Spleen (tissue), 13 donors: ENCODE measurements at regions of chrX and their contacts with region 1.

Region 1: GRCh38 chrX:100768679-100769338 is 36.9 kb upstream of the SYTL4 start:
- DNase-seq: peak; percentile 91
- H3K4me3 ChIP-seq: no peak overlapping the region
- H3K27ac ChIP-seq: no peak overlapping the region
- H3K4me1 ChIP-seq: no peaks in the 10 kb centered on the region
- H3K27me3 ChIP-seq: peaks cover 0 to 2% (median 0%) of the 10 kb centered on the region in 7 donors
- CTCF ChIP-seq: peak; percentile 83 to 99 (median 95)
- POLR2A ChIP-seq: no peak

Region 2: DNA sequence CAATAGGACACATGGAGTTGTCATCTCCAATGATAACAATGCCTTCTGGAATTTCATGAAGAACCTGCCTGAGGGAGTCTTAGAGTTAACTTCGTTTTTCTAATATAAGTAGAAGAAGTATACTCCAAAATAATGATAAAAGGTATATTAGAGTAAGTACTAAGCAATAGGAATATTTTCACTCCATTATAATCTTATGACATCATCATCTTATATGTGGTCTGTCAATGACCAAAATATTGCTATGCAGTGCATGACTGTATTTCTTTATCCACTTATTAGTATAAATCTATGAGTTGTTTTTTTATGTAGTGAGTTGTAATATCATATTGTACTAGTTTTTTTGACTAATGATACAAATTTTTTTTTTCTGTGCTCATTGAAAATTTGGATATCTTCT is 1204.6 kb before region 1 on chrX:
- intact Hi-C with region 1: no loop called
- DNase-seq: no peak
- H3K4me3 ChIP-seq: no peak overlapping the region
- H3K27ac ChIP-seq: no peak overlapping the region
- H3K4me1 ChIP-seq: no peaks in the 10 kb centered on the region
- H3K27me3 ChIP-seq: no peaks in the 10 kb centered on the region
- CTCF ChIP-seq: no peak
- POLR2A ChIP-seq: no peak

Region 3: DNA sequence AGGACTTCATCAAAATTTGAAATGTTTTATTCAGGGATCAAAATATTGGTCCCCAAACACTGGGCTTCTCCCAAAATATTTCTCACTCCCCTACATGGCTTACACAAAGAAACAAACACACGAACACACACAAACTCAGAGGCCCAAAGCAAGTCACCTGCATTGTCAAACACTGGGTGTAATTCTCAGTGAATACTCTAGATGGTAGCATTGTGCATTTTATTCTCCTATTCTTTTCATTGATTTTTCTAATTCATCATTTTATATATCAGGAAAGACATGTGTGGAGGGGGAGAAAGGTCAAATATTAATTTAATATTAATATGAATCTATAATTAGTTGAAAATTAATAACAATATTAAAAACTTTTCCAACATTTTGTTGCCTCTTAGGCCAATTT is 256.3 kb before region 1 on chrX:
- intact Hi-C with region 1: loop called (anchors 10 kb)
- DNase-seq: no peak
- H3K4me3 ChIP-seq: no peak overlapping the region
- H3K27ac ChIP-seq: no peak overlapping the region
- H3K4me1 ChIP-seq: no peaks in the 10 kb centered on the region
- H3K27me3 ChIP-seq: no peaks in the 10 kb centered on the region
- CTCF ChIP-seq: peak; percentile 25 to 71 (median 58)
- POLR2A ChIP-seq: no peak

Region 4: DNA sequence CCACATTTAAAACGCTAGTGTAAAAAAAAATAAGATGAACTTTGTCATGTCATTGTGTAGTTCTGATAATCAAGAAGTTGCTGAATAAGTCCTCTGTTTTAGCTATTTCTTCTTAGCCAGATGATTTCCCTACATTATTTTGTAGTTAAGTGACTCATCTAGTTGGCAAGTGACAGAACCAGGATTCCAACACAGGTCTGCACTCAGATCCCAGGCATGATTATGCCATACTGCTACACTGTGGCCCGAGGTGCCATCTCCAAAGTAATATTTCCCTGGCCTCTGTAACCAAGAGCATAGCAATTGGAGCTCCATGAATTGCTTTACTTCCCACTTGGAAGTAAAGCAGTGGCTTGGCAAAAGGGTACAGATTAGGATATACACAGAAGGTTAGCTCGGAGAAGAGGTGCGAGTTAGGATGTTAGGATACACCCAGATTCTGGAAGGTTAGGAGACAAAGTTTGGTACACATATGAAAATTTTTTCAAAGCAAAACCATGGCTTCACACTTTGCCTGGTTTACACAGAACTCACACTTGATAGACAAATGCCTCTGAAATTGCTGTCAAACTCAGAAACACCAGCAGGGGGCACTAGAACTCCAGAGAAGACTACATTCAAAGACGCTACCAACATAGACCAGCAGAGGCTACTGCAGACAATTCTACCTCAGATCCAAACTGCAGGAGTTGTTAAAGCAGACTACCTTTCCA is 83.4 kb before region 1 on chrX:
- intact Hi-C with region 1: loop called (anchors 2 kb)
- DNase-seq: no peak
- H3K4me3 ChIP-seq: no peak overlapping the region
- H3K27ac ChIP-seq: no peak overlapping the region
- H3K4me1 ChIP-seq: peaks cover 0 to 23% (median 0%) of the 10 kb centered on the region in 6 donors
- H3K27me3 ChIP-seq: no peaks in the 10 kb centered on the region
- CTCF ChIP-seq: peak; percentile 50 to 95 (median 74)
- POLR2A ChIP-seq: no peak